ENCODE measurements at regions of chr1 and their contacts with region 1.

Region 1: GRCh38 chr1:228405987-228406265 is 709 bp downstream of the TRIM11 start:
- DNase-seq: no peak
- H3K4me3 Mint-ChIP-seq: peak overlapping the region; percentile 98
- H3K27ac Mint-ChIP-seq: peak overlapping the region; percentile 97
- H3K4me1 Mint-ChIP-seq: peaks cover 49% of the 10 kb centered on the region
- H3K27me3 Mint-ChIP-seq: no peaks in the 10 kb centered on the region

Region 2: DNA sequence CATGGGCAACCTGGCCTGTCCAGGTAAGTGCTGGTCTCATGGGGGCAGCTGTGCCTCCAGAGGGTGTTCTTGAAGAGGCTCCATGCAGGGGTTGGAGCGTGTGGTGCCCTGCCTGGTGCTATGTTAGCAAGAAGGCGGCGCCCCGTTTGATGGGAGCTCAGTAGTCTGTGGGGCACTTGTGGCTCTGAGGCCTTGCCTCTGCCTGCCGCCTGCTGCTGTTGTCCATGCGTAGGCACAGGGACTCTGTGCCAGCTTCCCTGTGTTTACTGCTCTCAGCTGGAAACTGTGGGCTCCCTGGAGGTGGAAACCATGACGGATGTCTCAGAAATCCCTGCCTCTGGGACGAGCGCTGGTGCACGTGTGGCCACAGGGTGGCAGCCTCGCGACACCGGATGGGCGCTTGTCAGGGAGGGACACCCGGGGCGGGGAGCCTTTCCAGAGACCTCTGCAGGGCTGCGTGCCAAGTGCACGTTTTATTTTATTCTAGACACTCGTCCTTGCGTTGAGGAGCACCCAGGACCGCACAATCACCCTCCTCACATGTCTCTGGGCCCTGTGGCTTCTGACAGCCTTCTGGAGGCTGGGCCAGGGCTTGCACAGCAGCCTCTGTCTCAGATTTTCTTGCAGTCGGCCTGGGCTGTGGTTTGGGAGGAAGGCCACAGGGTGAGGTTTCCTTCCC is 643.6 kb before region 1 on chr1:
- intact Hi-C with region 1: loop called (anchors 10 kb)
- DNase-seq: peak; percentile 81
- H3K4me3 Mint-ChIP-seq: peak overlapping the region; percentile 47
- H3K27ac Mint-ChIP-seq: peak overlapping the region; percentile 77
- H3K4me1 Mint-ChIP-seq: peaks cover 91% of the 10 kb centered on the region
- H3K27me3 Mint-ChIP-seq: no peaks in the 10 kb centered on the region

Region 3: GRCh38 chr1:228102791-228103620 is 302.9 kb before region 1 on chr1 and contains the start of gene C1orf35:
- intact Hi-C with region 1: loop called (anchors 1 kb)
- DNase-seq: peak; percentile 96
- H3K4me3 Mint-ChIP-seq: peak within 1 kb of the TSS; percentile 92
- H3K27ac Mint-ChIP-seq: peak within 1 kb of the TSS; percentile 93
- H3K4me1 Mint-ChIP-seq: peaks cover 25% of the 10 kb centered on the region
- H3K27me3 Mint-ChIP-seq: no peaks in the 10 kb centered on the region
- total RNA-seq, gene C1orf35: 27.7 and 30.7 TPM in 2 replicates

Region 4: DNA sequence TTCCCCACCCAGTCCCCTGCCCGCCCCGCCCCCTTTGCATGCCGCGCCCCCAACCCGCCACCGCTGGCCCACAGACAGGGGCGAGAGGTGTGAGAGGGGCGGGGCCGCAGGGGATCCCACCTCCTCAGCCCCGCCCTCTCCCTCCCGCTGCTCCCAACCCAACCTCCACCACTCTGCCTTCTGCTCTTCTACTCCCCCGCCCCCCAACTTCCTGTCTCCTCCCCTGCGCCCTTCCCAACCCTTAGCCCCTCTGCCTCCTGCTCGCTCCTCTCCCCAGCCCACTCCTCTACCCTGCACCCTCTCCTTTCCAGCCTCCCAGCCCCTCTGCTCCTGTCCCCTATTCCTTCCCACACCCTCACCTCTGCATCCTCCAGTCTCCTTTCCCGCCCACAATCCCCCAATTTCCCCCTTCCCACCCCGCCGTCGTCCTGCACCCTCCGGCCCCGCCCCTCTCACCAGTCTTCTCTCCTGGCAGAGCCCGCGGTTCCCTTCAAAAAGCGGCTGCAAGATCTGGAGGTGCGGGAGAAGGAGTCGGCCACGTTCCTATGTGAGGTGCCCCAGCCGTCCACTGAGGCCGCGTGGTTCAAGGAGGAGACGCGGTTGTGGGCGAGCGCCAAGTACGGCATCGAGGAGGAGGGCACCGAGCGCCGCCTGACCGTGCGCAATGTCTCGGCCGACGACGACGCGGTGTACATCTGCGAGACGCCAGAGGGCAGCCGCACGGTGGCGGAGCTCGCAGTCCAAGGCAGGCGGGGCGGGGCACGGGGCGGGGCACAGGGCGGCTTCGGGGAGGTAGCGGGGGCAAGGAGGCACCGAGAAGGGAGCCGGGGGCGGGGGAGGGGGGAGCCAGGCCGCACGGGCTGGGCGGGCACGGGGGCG is 192.7 kb before region 1 on chr1:
- intact Hi-C with region 1: loop called (anchors 1 kb)
- DNase-seq: peak; percentile 80
- H3K4me3 Mint-ChIP-seq: peak overlapping the region; percentile 89
- H3K27ac Mint-ChIP-seq: peak overlapping the region; percentile 93
- H3K4me1 Mint-ChIP-seq: no peaks in the 10 kb centered on the region
- H3K27me3 Mint-ChIP-seq: peaks cover 4% of the 10 kb centered on the region

Region 5: DNA sequence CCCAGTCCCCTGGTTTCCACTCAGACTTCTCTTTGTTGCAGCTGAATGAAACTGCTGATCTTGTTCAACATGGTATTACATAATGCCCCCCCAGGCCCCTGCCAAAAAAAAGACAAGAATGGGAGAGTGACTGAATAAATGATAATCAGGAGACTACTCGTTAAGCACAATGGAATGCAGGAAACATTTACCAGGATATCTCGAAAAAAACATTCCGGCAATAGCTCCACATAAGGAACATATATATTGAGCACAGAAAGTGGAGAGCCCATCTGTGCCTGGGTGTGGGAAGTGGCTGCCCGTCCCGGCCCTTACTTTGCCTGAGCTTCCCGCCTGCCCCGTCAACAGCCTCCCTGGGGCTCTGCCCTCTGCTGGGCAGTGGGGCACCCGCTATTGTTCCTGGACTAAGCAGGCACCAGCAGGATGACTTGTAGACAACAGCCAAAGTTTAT is 12.7 kb before region 1 on chr1:
- intact Hi-C with region 1: no loop called
- DNase-seq: no peak
- H3K4me3 Mint-ChIP-seq: no peak overlapping the region
- H3K27ac Mint-ChIP-seq: no peak overlapping the region
- H3K4me1 Mint-ChIP-seq: peaks cover 9% of the 10 kb centered on the region
- H3K27me3 Mint-ChIP-seq: no peaks in the 10 kb centered on the region

Region 6: DNA sequence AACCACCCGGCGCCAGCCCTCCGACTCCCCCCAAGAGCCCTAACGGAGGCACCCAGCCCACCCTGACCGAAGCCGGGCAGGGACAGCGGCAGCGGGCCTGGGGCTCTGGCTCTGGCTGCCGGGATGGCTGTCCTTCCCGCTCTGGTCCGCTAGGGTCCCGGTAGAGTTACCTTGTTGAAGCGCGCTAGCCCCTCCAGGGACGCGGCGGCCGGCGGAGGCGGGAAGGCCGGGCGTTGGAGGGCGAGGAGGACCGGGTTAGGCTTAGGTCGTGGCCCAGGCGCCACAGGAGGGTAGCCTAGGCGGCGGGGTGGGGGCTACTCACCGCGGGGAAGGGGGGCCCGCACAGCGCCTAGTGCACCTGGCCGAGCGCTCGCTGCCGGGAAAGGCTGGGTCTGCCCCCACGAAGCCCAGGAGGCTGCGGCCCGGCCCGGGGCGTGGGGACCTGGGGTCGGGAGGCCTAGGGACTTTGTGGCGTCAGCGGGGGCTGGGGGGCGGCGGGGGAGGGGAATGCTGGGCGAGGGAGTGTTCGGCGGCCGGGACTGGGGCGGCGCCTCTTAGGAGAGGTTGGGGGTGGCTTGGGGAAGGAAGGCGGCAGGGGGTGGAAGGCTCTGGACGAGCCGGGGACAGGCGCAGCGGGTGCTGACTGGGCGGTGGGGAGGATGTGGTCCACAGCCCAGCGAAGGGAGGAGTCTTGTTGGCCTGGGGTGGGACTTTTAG is 10.4 kb after region 1 on chr1 and contains the start of gene TRIM17:
- intact Hi-C with region 1: loop called (anchors 1 kb)
- DNase-seq: peak; percentile 38
- H3K4me3 Mint-ChIP-seq: peak within 1 kb of the TSS; percentile 77
- H3K27ac Mint-ChIP-seq: peak within 1 kb of the TSS; percentile 61
- H3K4me1 Mint-ChIP-seq: peaks cover 20% of the 10 kb centered on the region
- H3K27me3 Mint-ChIP-seq: peaks cover 7% of the 10 kb centered on the region
- total RNA-seq, gene TRIM17: 1.4 and 1.7 TPM in 2 replicates

Region 7: DNA sequence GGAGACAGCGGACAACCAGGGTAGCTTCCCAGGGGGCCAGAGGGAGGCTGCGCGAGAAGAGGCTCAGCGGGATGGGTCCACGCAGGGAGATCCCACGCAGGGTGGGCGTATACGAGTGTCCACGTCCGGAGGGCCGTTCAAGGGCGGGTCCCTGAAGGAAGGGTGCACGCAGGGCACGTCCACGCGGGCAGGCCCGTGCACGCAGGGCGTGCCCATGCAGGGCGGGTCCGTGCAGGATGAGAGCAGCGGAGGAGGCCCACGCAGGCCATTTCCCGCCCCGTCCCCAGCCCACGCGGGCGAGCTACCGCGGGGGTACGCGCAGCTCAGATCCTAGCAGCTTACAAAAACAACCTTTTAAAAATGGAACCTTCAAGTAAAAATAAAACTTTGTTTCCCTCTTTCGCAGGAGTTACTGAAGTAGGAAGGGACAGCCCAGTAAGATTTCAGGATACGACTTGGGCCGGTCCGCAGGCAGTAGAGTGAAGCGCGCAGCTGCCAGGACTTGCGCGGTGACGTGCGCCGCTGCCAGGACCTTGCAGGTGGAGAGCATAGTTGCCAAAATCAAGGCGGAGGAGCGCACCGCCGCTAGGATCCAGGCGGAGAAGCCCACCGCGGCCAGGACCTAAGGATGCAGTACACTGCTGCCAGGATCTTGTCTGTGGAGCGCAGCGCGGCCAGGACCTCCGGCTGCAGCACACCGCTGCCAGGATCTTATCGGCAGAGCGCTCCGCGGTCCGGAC is 80.8 kb after region 1 on chr1:
- intact Hi-C with region 1: loop called (anchors 1 kb)
- DNase-seq: peak; percentile 84
- H3K4me3 Mint-ChIP-seq: peak overlapping the region; percentile 97
- H3K27ac Mint-ChIP-seq: peak overlapping the region; percentile 99
- H3K4me1 Mint-ChIP-seq: peaks cover 29% of the 10 kb centered on the region
- H3K27me3 Mint-ChIP-seq: peaks cover 7% of the 10 kb centered on the region